Gastrocnemius medialis (tissue), 4 donors: ENCODE measurements at regions of chr9 and their contacts with region 1.

Region 1: GRCh38 chr9:70602321-70603019 is 188.0 kb upstream of the KLF9 start:
- DNase-seq: peak; percentile 47 to 71
- ATAC-seq: peak; percentile 67 to 71
- H3K4me3 ChIP-seq: peak overlapping the region; percentile 18 to 47 (median 29)
- H3K27ac ChIP-seq: peak overlapping the region; percentile 86 to 96 (median 88)
- H3K4me1 ChIP-seq: peaks cover 25 to 37% of the 10 kb centered on the region in 2 donors
- H3K27me3 ChIP-seq: no peaks in the 10 kb centered on the region
- CTCF ChIP-seq: peak; percentile 81 to 93 (median 84)
- POLR2A ChIP-seq: no peak

Region 2: DNA sequence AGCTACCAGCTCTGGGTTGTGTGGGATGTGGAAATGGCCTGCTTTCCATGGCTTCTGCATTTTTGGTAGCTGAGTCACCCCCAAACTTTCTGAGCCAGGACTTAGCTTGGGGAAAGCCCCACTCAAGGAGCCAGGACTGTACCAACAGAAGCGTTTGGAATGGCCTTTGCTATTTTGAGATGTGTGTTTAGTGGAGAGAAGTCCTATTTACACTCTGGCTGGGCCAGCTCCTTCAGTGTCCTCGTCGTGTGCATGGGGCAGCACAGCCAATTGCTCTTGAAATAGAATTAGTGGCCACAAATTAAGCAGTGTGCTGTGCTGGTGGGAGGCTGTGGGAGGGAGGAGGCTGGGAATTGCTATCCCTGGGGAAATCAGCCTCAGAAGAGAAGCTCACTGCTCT is 1225.8 kb before region 1 on chr9:
- in situ Hi-C with region 1: loop called in 1 of 4 experiments (anchors 25 kb)
- intact Hi-C with region 1: no loop called
- DNase-seq: peak; percentile 42 to 48
- ATAC-seq: peak; percentile 14 to 16
- H3K4me3 ChIP-seq: no peak overlapping the region
- H3K27ac ChIP-seq: peak overlapping the region; percentile 90 to 98 (median 96)
- H3K4me1 ChIP-seq: peaks cover 51 to 56% of the 10 kb centered on the region in 2 donors
- H3K27me3 ChIP-seq: no peaks in the 10 kb centered on the region
- CTCF ChIP-seq: no peak
- POLR2A ChIP-seq: peak in 1 of 2 donors; percentile 31

Region 3: GRCh38 chr9:69898714-69899209 is 703.7 kb before region 1 on chr9:
- in situ Hi-C with region 1: no loop called
- intact Hi-C with region 1: no loop called
- DNase-seq: no peak
- ATAC-seq: no peak
- H3K4me3 ChIP-seq: no peak overlapping the region
- H3K27ac ChIP-seq: no peak overlapping the region
- H3K4me1 ChIP-seq: no peaks in the 10 kb centered on the region
- H3K27me3 ChIP-seq: no peaks in the 10 kb centered on the region
- CTCF ChIP-seq: no peak
- POLR2A ChIP-seq: no peak

Region 4: DNA sequence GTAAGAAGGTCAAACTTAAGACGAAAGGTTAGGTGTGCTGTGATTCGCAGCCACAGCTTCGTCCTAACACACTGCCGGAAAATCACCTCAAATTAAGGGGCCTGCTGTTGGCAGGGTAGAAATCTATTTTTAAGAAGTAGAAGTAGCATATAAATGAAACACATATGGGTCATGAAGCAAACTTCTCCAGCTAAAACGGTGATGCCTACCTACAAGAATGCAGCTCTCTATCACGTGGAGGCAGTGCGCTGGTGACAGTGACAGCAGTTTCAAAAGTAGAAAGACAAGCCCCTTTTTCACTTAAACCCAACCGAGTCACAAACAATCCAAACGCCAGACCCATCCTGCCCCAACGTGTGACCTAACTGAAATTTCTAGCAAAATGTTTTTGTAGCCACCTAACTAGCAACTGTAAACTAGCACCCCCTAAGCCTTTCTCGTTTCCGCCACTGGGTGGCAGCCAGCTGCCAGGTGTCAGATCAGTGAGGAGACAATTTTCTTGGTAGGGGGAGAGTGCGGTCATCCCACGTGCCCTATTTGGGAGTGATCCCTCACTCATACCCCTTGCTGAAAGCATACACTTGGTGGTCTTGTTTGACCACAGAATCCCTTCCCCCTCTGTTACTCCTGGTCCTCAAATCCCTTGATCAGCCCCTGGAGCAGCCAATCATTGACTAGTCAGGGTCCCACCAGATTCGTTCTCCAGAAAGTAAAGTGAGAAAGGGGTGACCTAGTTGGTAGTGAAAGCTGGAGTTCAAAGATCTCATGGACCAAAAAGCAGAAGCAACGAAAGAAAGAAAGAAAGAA is 630.6 kb before region 1 on chr9:
- in situ Hi-C with region 1: loop called in 1 of 4 experiments (anchors 25 kb)
- intact Hi-C with region 1: loop called (anchors 2 kb)
- DNase-seq: peak; percentile 35 to 59
- ATAC-seq: peak in 1 of 2 donors; percentile 46
- H3K4me3 ChIP-seq: no peak overlapping the region
- H3K27ac ChIP-seq: no peak overlapping the region
- H3K4me1 ChIP-seq: peaks cover 0 to 3% of the 10 kb centered on the region in 2 donors
- H3K27me3 ChIP-seq: no peaks in the 10 kb centered on the region
- CTCF ChIP-seq: peak; percentile 60 to 80 (median 79)
- POLR2A ChIP-seq: no peak

Region 5: GRCh38 chr9:70340572-70340971 is 261.9 kb before region 1 on chr9:
- in situ Hi-C with region 1: loop called in 2 of 4 experiments (anchors 5 kb)
- intact Hi-C with region 1: loop called (anchors 1 kb)
- DNase-seq: no peak
- ATAC-seq: no peak
- H3K4me3 ChIP-seq: no peak overlapping the region
- H3K27ac ChIP-seq: no peak overlapping the region
- H3K4me1 ChIP-seq: no peaks in the 10 kb centered on the region
- H3K27me3 ChIP-seq: no peaks in the 10 kb centered on the region
- CTCF ChIP-seq: peak; percentile 39 to 64 (median 58)
- POLR2A ChIP-seq: no peak

Region 6: GRCh38 chr9:70352802-70353201 is 249.7 kb before region 1 on chr9:
- in situ Hi-C with region 1: loop called in 3 of 4 experiments (anchors 5 to 10 kb)
- intact Hi-C with region 1: loop called (anchors 1 kb)
- DNase-seq: no peak
- ATAC-seq: peak; percentile 47 to 68
- H3K4me3 ChIP-seq: no peak overlapping the region
- H3K27ac ChIP-seq: peak overlapping the region in 3 of 4 donors; percentile 16 to 43 (median 18)
- H3K4me1 ChIP-seq: peaks cover 0 to 16% of the 10 kb centered on the region in 2 donors
- H3K27me3 ChIP-seq: no peaks in the 10 kb centered on the region
- CTCF ChIP-seq: peak; percentile 35 to 79 (median 65)
- POLR2A ChIP-seq: no peak

Region 7: DNA sequence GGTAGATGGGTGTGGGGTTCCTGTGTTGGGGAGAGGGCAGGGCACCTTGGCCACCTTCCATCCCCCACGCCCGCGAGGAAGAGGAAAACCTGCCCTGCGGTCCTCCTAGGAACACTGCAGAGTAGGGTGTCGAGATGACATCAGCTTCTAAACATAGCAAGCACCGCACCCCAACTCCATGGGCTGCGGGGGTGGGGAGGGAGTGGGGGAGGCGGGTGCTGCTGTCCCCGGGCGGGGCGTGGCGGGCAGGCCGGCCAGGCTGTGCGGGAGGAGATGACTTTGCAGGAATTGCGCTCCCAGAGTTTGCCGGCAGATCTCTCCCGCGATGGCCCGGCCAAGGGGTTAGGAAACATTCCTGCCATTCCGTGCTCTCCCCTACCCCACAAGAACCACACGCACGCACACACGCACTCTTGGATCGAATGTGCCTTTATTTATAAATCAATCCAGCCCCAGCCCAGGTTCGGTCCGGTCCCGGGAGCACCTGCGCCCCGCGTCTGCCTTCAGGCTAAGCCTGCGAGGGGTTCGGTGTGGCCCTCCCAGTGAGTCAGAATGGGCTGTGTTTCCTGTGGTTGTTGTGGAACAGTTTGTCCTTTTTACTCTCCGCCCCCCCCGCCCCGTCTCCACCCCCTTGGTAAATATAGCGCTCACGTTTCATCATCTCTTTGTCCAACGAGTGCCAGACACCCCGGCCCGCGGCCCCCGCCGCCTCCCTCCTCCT is 182.8 kb before region 1 on chr9:
- in situ Hi-C with region 1: loop called in 1 of 4 experiments (anchors 5 kb)
- intact Hi-C with region 1: loop called (anchors 1 kb)
- DNase-seq: peak; percentile 97 to 98
- ATAC-seq: peak; percentile 42 to 48
- H3K4me3 ChIP-seq: peak overlapping the region; percentile 54 to 62 (median 56)
- H3K27ac ChIP-seq: peak overlapping the region; percentile 92 to 100 (median 100)
- H3K4me1 ChIP-seq: peaks cover 69 to 70% of the 10 kb centered on the region in 2 donors
- H3K27me3 ChIP-seq: no peaks in the 10 kb centered on the region
- CTCF ChIP-seq: peak in 1 of 5 experiments; percentile 5
- POLR2A ChIP-seq: no peak

Region 8: GRCh38 chr9:70805949-70806348 is 203.5 kb after region 1 on chr9:
- in situ Hi-C with region 1: no loop called
- intact Hi-C with region 1: no loop called
- DNase-seq: peak; percentile 22 to 45
- ATAC-seq: peak; percentile 61 to 83
- H3K4me3 ChIP-seq: no peak overlapping the region
- H3K27ac ChIP-seq: peak overlapping the region in 1 of 4 donors; percentile 50
- H3K4me1 ChIP-seq: peaks cover 0 to 4% of the 10 kb centered on the region in 2 donors
- H3K27me3 ChIP-seq: no peaks in the 10 kb centered on the region
- CTCF ChIP-seq: no peak
- POLR2A ChIP-seq: no peak